ENCODE measurements at regions of chr17 and their contacts with region 1.

Region 1: GRCh38 chr17:77068915-77069314 is 71.9 kb upstream of the SEC14L1 start:
- DNase-seq: no peak
- ATAC-seq: no peak
- H3K4me3 ChIP-seq: no peak overlapping the region
- H3K4me3 Mint-ChIP-seq: no peak overlapping the region
- H3K27ac ChIP-seq: no peak overlapping the region
- H3K27ac Mint-ChIP-seq: no peak overlapping the region
- H3K4me1 ChIP-seq: peaks cover 4% of the 10 kb centered on the region
- H3K4me1 Mint-ChIP-seq: no peaks in the 10 kb centered on the region
- H3K27me3 ChIP-seq: peaks cover 7 to 12% of the 10 kb centered on the region in 2 experiments
- H3K27me3 Mint-ChIP-seq: peaks cover 35% of the 10 kb centered on the region
- CTCF ChIP-seq: no peak

Region 2: DNA sequence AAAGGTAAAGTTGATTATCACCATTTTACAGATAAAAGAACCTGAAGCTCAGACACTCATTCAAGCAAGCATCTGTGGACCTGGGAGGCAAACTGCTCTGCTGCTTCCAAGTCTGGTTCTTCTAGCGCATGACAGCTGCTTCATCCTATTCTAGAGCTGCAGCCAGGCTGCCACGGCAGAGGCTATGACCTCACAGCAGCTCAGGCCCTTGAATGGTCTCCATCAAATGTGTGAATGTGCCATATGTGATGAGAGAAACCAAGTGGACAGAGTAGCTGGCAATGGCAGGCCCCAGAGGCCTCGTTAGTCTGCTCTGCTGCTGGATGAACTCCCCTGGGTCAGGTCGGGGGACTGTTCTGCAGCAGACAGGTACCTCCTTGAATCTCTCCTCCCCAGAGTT is 897.2 kb before region 1 on chr17:
- CTCF ChIA-PET with region 1: no interaction called
- POLR2A ChIA-PET with region 1: no interaction called
- intact Hi-C with region 1: no loop called
- DNase-seq: no peak
- ATAC-seq: no peak
- H3K4me3 ChIP-seq: no peak overlapping the region
- H3K4me3 Mint-ChIP-seq: no peak overlapping the region
- H3K27ac ChIP-seq: no peak overlapping the region
- H3K27ac Mint-ChIP-seq: no peak overlapping the region
- H3K4me1 ChIP-seq: peaks cover 7% of the 10 kb centered on the region
- H3K4me1 Mint-ChIP-seq: peaks cover 30% of the 10 kb centered on the region
- H3K27me3 ChIP-seq: no peaks in the 10 kb centered on the region
- H3K27me3 Mint-ChIP-seq: no peaks in the 10 kb centered on the region
- CTCF ChIP-seq: no peak

Region 3: DNA sequence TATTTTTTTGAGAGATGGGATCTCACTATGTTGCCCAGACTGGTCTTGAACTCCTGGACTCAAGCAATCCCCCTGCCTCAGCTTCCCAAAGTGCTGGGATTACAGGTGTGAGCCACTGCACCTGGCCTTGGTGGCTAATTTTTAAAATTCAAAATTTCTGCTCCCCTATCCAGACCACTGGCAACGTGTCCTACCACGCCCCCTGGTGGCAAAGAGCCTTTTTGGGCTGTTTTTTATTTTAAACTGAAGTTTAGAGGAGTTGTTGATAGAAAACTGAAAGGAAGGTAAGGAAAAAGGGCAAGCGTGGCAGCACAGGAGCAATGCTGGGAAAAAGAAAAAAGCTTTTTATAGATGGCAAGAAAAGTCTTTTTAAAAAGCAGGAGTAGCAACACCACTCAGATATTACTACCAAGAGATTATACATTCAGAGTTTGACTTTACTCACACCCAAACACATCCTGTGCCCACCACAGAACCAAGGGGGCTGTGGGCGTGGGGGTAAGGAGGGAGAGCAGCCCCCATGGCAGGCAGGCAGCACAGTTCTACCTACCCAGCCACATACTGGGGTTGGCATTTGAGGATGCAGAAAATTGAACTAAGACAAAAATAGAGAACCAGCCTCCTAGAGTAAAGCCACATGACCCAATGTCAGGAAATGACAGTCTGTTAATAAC is 354.0 kb before region 1 on chr17:
- CTCF ChIA-PET with region 1: no interaction called
- POLR2A ChIA-PET with region 1: no interaction called
- intact Hi-C with region 1: loop called in 1 of 2 experiments (anchors 5 kb)
- DNase-seq: peak; percentile 64 to 87 (median 79)
- ATAC-seq: no peak
- H3K4me3 ChIP-seq: no peak overlapping the region
- H3K4me3 Mint-ChIP-seq: peak overlapping the region; percentile 3
- H3K27ac ChIP-seq: no peak overlapping the region
- H3K27ac Mint-ChIP-seq: peak overlapping the region; percentile 96
- H3K4me1 ChIP-seq: peaks cover 33% of the 10 kb centered on the region
- H3K4me1 Mint-ChIP-seq: peaks cover 42% of the 10 kb centered on the region
- H3K27me3 ChIP-seq: no peaks in the 10 kb centered on the region
- H3K27me3 Mint-ChIP-seq: no peaks in the 10 kb centered on the region
- CTCF ChIP-seq: peak; percentile 88

Region 4: DNA sequence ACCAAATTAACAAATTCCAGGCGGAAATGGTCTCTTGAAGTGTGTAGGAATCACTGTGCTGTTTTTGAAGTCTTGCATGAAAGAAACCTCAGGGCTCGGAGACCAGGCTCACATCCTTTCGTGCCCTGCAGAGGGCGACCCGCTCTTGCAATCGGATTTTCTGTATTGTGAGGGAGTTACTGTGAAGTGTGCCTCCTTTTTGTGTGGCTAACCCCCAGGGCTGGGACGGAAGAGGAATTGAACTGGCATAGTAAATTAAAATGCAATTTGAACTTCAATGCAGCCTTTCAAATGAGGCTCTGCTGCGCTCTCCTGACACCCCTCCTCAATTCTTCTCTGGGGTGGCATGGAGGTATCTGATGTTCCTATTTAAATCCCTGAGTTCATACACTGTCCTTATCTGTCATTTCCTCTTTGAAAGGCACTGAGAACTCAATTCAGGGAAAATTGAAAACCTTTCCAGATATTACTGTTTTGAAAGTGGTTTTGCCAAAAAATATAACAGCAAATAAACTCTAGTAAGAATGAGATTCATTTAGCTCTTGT is 252.3 kb before region 1 on chr17:
- CTCF ChIA-PET with region 1: no interaction called
- POLR2A ChIA-PET with region 1: no interaction called
- intact Hi-C with region 1: loop called (anchors 1 to 2 kb)
- DNase-seq: peak; percentile 43 to 77 (median 56)
- ATAC-seq: peak; percentile 98
- H3K4me3 ChIP-seq: no peak overlapping the region
- H3K4me3 Mint-ChIP-seq: no peak overlapping the region
- H3K27ac ChIP-seq: no peak overlapping the region
- H3K27ac Mint-ChIP-seq: no peak overlapping the region
- H3K4me1 ChIP-seq: peaks cover 7% of the 10 kb centered on the region
- H3K4me1 Mint-ChIP-seq: peaks cover 9% of the 10 kb centered on the region
- H3K27me3 ChIP-seq: no peaks in the 10 kb centered on the region
- H3K27me3 Mint-ChIP-seq: no peaks in the 10 kb centered on the region
- CTCF ChIP-seq: peak; percentile 71

Region 5: GRCh38 chr17:76868176-76868668 is 200.7 kb before region 1 on chr17 and contains the start of gene MGAT5B:
- CTCF ChIA-PET with region 1: interaction called, 25 read pairs
- POLR2A ChIA-PET with region 1: interaction called, 3 read pairs
- intact Hi-C with region 1: loop called (anchors 1 kb)
- DNase-seq: peak; percentile 56 to 91 (median 74)
- ATAC-seq: peak; percentile 95
- H3K4me3 ChIP-seq: no peak within 1 kb of the TSS
- H3K4me3 Mint-ChIP-seq: peak within 1 kb of the TSS; percentile 88
- H3K27ac ChIP-seq: no peak within 1 kb of the TSS
- H3K27ac Mint-ChIP-seq: no peak within 1 kb of the TSS
- H3K4me1 ChIP-seq: peaks cover 13% of the 10 kb centered on the region
- H3K4me1 Mint-ChIP-seq: peaks cover 16% of the 10 kb centered on the region
- H3K27me3 ChIP-seq: peaks cover 24 to 41% of the 10 kb centered on the region in 2 experiments
- H3K27me3 Mint-ChIP-seq: peaks cover 37% of the 10 kb centered on the region
- CTCF ChIP-seq: no peak
- total RNA-seq, gene MGAT5B: 0.28 to 0.77 TPM

Region 6: DNA sequence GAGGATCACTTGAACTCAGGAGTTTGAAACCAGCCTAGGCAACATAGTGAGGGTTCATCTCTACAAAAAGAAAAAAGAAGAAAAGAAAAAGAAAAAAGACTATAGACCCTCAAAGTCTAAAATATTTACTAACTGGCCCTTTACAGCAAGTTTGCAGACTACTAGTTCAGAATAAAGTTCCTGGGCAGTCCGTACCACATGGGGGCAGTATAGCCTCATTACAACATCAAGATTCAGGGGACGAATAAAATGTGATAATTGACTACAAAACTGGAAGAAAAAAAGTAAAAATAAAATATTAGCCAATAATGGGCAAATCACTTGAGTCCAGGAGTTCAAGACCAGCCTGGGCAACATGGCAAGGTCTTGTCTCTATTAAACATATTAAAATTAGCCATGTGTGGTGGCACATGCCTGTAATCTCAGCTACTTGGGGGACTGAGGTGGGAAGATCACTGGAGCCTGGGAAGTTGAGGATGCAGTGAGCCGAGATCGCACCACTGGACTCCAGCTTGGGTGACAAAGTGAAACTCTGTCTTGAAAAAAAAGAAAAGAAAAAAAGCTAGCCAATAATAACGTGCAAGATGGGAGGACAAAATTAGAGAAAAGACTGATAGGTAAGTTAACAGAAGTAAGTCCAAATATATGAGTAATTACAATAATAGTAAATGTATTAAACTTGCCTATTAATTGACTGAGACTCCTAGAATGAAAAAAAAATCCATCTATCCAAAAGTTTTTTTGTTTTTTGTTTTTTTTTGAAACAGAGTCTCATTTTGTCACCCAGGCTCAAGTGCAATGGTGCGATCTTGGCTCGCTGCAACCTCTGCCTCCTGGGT is 57.5 kb before region 1 on chr17:
- CTCF ChIA-PET with region 1: no interaction called
- POLR2A ChIA-PET with region 1: no interaction called
- intact Hi-C with region 1: no loop called
- DNase-seq: peak; percentile 31 to 74 (median 46)
- ATAC-seq: no peak
- H3K4me3 ChIP-seq: no peak overlapping the region
- H3K4me3 Mint-ChIP-seq: no peak overlapping the region
- H3K27ac ChIP-seq: no peak overlapping the region
- H3K27ac Mint-ChIP-seq: no peak overlapping the region
- H3K4me1 ChIP-seq: no peaks in the 10 kb centered on the region
- H3K4me1 Mint-ChIP-seq: no peaks in the 10 kb centered on the region
- H3K27me3 ChIP-seq: no peaks in the 10 kb centered on the region
- H3K27me3 Mint-ChIP-seq: no peaks in the 10 kb centered on the region
- CTCF ChIP-seq: peak; percentile 67